ENCODE measurements at regions of chr4 and their contacts with region 1.

Region 1: DNA sequence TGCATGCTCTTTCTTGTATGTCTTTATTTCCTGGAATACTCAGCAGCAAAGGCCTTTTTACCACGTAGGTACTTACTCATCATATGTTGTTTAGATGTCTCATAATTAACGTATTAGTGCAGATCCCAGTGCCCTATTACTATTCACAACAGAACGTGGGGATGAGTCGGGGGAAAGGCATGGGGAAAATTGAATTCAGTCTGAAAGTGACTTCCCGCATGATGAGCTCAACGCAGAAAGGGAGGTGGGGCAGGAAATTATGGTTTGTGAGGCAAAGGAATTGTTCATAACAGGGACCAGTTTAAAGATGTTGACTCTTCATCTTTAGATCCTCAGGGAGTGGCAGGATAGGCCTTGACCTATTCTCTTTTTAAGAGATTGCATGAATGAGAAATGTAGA is 2.0 kb upstream of the TMPRSS11D start:
- DNase-seq: peak; percentile 91
- H3K4me3 ChIP-seq: peak overlapping the region in 1 of 3 experiments; percentile 40
- H3K27ac ChIP-seq: peak overlapping the region; percentile 96
- H3K4me1 ChIP-seq: peaks cover 18% of the 10 kb centered on the region
- H3K27me3 ChIP-seq: no peaks in the 10 kb centered on the region
- CTCF ChIP-seq: no peak
- POLR2A ChIP-seq: no peak

Region 2: GRCh38 chr4:68038272-68038671 is 152.5 kb after region 1 on chr4:
- CTCF ChIA-PET with region 1: no interaction called
- POLR2A ChIA-PET with region 1: no interaction called
- dilution Hi-C with region 1: no loop called
- intact Hi-C with region 1: no loop called
- DNase-seq: no peak
- H3K4me3 ChIP-seq: no peak overlapping the region
- H3K27ac ChIP-seq: no peak overlapping the region
- H3K4me1 ChIP-seq: no peaks in the 10 kb centered on the region
- H3K27me3 ChIP-seq: no peaks in the 10 kb centered on the region
- CTCF ChIP-seq: no peak
- POLR2A ChIP-seq: no peak

Region 3: GRCh38 chr4:68271851-68272756 is 386.3 kb after region 1 on chr4:
- CTCF ChIA-PET with region 1: no interaction called
- POLR2A ChIA-PET with region 1: no interaction called
- dilution Hi-C with region 1: no loop called
- intact Hi-C with region 1: no loop called
- DNase-seq: peak; percentile 73
- H3K4me3 ChIP-seq: no peak overlapping the region
- H3K27ac ChIP-seq: no peak overlapping the region
- H3K4me1 ChIP-seq: no peaks in the 10 kb centered on the region
- H3K27me3 ChIP-seq: peaks cover 10 to 15% of the 10 kb centered on the region in 2 experiments
- CTCF ChIP-seq: peak; percentile 37 to 42
- POLR2A ChIP-seq: no peak

Region 4: GRCh38 chr4:68349649-68350360 is 464.0 kb after region 1 on chr4 and contains the start of gene YTHDC1:
- CTCF ChIA-PET with region 1: no interaction called
- POLR2A ChIA-PET with region 1: no interaction called
- dilution Hi-C with region 1: no loop called
- intact Hi-C with region 1: loop called (anchors 1 kb)
- DNase-seq: peak; percentile 98
- H3K4me3 ChIP-seq: peak within 1 kb of the TSS; percentile 65 to 99 (median 82)
- H3K27ac ChIP-seq: peak within 1 kb of the TSS; percentile 89
- H3K4me1 ChIP-seq: peaks cover 18% of the 10 kb centered on the region
- H3K27me3 ChIP-seq: peaks cover 2% of the 10 kb centered on the region in 2 experiments
- CTCF ChIP-seq: no peak
- POLR2A ChIP-seq: peak; percentile 57
- total RNA-seq, gene YTHDC1: 60.4 and 68.7 TPM in 2 replicates